Pancreas (tissue), 10 donors: ENCODE measurements at regions of chr7 and their contacts with region 1.

Region 1: DNA sequence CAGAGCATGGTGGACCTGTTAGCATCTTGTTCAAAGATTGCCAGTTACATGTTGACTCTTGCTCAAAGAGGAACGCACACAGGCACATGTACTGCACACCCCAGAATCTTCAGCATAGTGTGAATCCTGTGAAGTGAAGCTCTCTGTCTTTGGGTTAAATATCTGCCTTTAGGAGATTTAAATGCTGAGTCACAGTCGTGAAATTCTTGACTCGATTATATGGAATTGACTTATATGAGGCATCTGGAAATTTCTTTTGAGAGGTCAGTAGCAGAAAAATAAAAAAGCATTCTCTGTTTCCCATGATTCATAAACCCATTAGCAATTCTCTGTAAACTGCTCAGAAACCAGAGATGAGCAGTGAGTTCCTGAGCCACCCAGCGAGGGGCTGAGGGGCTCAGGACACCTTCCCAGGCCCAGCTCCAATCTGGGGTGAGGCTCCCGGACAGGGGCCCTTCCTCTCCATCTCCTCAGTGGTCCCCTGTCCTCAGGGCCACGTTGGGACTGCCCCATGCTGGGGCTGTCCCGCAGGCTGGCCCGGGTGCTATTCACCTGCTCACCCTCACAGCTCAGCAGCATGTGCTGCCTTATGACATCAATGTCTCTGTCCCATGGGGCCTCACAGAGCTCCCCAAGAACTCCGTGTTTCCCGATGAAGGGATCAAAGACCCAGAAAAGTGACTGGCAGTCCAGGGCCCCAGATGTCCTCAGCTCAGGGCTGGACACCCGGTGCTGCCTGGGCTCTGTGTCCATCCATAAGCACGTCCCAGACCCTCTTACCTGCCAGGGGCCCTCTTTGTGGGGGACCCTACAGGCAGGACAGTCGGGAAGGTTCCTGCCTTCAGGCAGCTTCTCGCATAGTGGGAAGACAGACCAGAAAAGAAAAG is 50.0 kb upstream of the INSIG1 start:
- DNase-seq: no peak
- ATAC-seq: no peak
- H3K4me3 ChIP-seq: no peak overlapping the region
- H3K27ac ChIP-seq: no peak overlapping the region
- H3K4me1 ChIP-seq: peaks cover 0 to 11% (median 0%) of the 10 kb centered on the region in 3 donors
- H3K27me3 ChIP-seq: no peaks in the 10 kb centered on the region
- CTCF ChIP-seq: no peak

Region 2: DNA sequence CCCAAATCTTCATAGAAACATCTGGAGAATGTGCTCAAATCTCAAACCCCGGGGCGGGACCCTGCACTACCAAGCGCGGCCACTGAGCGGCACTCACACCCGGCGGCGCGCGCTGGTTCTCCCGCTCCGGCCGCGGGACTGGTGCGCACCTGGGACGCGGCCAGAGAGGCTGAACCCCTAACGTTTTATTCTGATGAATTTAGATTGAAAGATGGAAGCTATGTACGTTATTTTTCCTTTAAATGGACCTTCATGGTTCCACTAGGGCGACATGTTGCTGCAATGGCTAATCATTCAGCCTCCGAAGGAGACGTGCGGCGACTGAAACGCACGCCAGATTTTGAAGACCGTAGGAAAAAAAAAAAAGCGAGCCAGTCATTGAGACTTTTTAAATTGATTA is 57.0 kb before region 1 on chr7:
- intact Hi-C with region 1: loop called in 1 of 3 experiments (anchors 5 kb)
- DNase-seq: peak in 4 of 6 donors; percentile 35 to 91 (median 66)
- ATAC-seq: peak; percentile 85 to 99 (median 96)
- H3K4me3 ChIP-seq: peak overlapping the region in 2 of 4 donors; percentile 30
- H3K27ac ChIP-seq: no peak overlapping the region
- H3K4me1 ChIP-seq: no peaks in the 10 kb centered on the region
- H3K27me3 ChIP-seq: no peaks in the 10 kb centered on the region
- CTCF ChIP-seq: peak; percentile 74 to 84 (median 78)

Region 3: DNA sequence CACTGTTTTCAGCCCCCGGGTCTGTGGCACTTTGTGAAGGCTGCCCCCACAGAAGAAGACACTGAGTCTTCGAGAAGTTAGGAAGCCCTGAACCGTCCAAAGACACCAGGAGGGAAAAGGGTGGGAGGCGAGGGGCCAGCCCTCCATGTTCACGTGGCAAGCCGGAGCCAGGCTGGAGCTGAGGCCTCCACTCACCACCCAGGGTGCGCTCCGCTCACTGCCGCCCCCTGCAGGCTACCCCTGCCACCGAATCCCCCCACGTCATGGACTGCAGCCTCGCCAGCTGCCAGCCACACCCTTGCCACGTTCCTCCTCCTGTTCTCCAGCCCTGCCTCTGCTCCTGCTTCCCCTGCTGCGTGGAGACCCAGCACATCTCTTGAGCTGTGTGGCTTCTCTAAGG is 151.2 kb after region 1 on chr7:
- intact Hi-C with region 1: no loop called
- DNase-seq: peak in 1 of 6 donors; percentile 61
- ATAC-seq: no peak
- H3K4me3 ChIP-seq: no peak overlapping the region
- H3K27ac ChIP-seq: no peak overlapping the region
- H3K4me1 ChIP-seq: no peaks in the 10 kb centered on the region
- H3K27me3 ChIP-seq: no peaks in the 10 kb centered on the region
- CTCF ChIP-seq: no peak

Region 4: DNA sequence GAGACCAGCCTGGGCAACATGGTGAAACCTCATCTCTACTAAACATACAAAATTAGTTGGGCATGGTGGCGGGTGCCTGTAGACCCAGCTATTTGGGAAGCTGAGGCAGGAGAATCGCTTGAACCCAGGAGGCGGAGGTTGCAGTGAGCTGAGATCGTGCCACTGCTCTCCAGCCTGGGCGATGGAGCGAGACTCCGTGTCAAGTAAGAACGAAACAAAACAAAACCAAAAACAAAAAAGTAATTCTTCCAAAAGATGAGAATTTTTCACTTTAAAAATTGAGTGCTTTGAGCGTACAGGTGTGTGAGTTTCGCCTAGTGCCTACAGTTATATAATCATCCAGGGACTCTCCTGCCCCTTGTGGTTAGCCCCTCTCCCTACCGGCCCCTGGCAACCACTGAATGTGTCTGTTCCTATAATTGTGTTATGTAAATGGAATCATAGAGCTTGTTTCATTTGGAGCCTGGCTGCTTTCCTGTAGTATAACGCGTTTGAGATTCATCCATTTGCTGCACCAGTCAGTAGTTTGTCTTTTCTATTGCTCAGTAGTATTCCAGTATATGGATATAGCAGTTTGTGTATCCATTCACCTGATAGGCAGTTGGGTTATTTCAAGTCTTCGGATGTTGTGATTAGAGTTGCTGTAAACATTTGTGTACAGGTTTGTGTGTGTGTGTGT is 476.7 kb after region 1 on chr7:
- intact Hi-C with region 1: no loop called
- DNase-seq: no peak
- ATAC-seq: no peak
- H3K4me3 ChIP-seq: no peak overlapping the region
- H3K27ac ChIP-seq: no peak overlapping the region
- H3K4me1 ChIP-seq: peaks cover 13 to 24% (median 21%) of the 10 kb centered on the region in 3 donors
- H3K27me3 ChIP-seq: no peaks in the 10 kb centered on the region
- CTCF ChIP-seq: no peak